Natural killer cell (primary cell): ENCODE measurements at regions of chr5 and their contacts with region 1.

Region 1: DNA sequence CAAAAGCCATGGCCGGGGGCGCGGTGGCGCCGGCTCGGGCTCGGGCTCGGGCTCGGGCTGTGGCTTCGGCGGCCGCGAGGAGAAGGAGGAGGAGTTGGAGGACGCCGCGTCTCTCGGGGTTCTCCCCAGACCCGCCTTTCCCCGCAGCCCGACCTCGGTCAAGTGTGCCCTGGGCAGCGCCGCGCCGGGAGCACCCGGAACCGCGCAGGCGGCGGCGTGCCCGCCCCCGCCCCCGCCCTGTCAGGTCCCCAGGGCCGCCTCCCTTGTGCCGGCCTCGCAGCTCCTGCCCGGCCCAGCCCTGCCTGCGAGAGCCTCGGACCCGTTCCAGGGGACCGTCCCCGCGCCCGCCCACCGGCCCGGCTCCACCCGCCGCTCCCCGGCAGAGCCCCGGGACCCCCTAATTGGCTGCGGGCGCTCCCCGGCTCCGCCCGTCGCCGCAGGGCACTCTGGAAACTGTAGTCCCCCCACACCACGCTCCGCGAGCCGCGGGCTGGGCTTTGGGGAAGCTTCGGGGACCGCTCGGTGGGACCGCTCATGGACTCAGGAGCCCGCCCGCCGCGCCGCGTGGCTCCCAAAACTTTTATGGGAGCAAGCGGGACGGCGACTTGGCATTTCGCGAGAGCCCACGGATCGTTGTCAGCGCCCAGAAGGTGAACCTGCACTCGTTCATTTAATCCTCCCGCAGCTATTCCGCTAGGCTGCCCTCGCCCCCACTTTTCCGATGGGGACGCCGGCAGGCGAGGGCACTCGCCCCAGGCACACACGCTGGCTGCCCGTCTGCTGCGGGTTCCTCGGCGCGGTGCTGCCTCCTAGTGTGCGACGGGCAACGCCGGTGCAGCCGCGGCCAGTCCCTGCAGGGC is at the start of gene STK10:
- DNase-seq: peak; percentile 87 to 95
- ATAC-seq: peak; percentile 65 to 85 (median 76)
- H3K4me3 ChIP-seq: peak within 1 kb of the TSS; percentile 66
- H3K4me3 Mint-ChIP-seq: peak within 1 kb of the TSS; percentile 98
- H3K27ac ChIP-seq: peak within 1 kb of the TSS; percentile 85
- H3K27ac Mint-ChIP-seq: peak within 1 kb of the TSS; percentile 97 to 98
- H3K4me1 ChIP-seq: peaks cover 30% of the 10 kb centered on the region
- H3K4me1 Mint-ChIP-seq: peaks cover 39 to 40% of the 10 kb centered on the region in 2 donors
- H3K27me3 ChIP-seq: no peaks in the 10 kb centered on the region
- H3K27me3 Mint-ChIP-seq: no peaks in the 10 kb centered on the region
- CTCF ChIP-seq: peak; percentile 86
- total RNA-seq, gene STK10: 705 to 879 (median 783) TPM

Region 2: GRCh38 chr5:172006321-172007174 is 181.7 kb before region 1 on chr5 and contains the start of gene FBXW11:
- intact Hi-C with region 1: loop called (anchors 5 kb)
- DNase-seq: peak; percentile 90 to 98
- ATAC-seq: peak; percentile 88 to 95 (median 89)
- H3K4me3 ChIP-seq: peak within 1 kb of the TSS; percentile 72
- H3K4me3 Mint-ChIP-seq: peak within 1 kb of the TSS; percentile 100
- H3K27ac ChIP-seq: peak within 1 kb of the TSS; percentile 98
- H3K27ac Mint-ChIP-seq: peak within 1 kb of the TSS; percentile 98 to 100
- H3K4me1 ChIP-seq: peaks cover 26% of the 10 kb centered on the region
- H3K4me1 Mint-ChIP-seq: peaks cover 52 to 53% of the 10 kb centered on the region in 2 donors
- H3K27me3 ChIP-seq: no peaks in the 10 kb centered on the region
- H3K27me3 Mint-ChIP-seq: no peaks in the 10 kb centered on the region
- CTCF ChIP-seq: no peak
- total RNA-seq, gene FBXW11: 26.7 to 40.3 (median 39.5) TPM

Region 3: DNA sequence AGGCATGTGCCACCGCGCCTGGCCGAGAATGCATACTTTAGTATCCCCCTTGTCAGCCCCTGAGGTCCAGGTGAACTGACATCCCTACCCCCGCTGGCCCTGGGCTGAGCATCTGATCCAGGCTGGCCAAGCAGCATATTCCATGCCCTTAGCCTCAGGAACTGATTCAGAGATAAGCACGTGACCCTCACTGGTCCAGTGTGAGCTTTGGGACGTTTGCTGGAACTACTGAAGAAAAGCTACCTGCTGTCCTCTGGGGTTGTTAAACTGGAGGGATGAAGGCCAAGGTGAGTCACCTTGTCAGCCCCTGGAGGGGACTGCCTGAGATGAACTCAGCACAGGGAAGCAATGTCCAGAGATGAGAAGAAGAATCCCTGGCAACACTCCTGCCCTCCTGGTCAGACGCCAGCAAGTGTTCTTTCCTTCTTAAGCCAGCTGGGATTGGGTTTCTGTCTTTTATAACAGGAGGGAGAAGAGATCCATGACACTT is 122.7 kb before region 1 on chr5:
- intact Hi-C with region 1: loop called (anchors 2 kb)
- DNase-seq: no peak
- ATAC-seq: no peak
- H3K4me3 ChIP-seq: no peak overlapping the region
- H3K4me3 Mint-ChIP-seq: peak overlapping the region; percentile 82
- H3K27ac ChIP-seq: peak overlapping the region; percentile 65
- H3K27ac Mint-ChIP-seq: peak overlapping the region; percentile 92 to 94
- H3K4me1 ChIP-seq: peaks cover 36% of the 10 kb centered on the region
- H3K4me1 Mint-ChIP-seq: peaks cover 60 to 62% of the 10 kb centered on the region in 2 donors
- H3K27me3 ChIP-seq: no peaks in the 10 kb centered on the region
- H3K27me3 Mint-ChIP-seq: no peaks in the 10 kb centered on the region
- CTCF ChIP-seq: no peak

Region 4: DNA sequence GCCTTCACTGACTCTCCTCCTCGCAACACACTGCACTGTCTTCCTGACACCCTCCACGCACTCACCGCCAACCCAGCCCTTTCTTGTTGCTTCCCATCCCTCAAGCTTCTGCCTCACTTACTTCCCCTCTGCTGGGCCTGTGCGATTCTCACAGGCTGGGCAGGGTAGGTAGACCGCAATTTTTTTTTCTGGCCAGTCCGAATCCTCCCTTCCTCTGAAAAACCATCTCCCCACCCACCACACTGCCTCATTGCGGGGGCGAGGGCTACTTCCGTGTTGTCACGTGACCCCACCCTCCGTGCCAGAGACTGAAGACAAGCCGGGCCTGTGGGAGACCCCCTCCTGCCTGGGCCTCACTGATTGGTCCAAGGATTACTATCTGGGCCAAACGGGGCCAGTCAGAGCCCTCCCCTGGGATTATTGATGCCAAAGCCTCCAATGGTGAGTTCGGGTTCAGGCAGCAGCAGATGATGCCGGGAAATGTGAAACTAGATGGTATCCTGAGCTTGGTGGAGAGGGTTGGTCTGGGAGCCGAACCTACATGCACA is 73.3 kb before region 1 on chr5:
- intact Hi-C with region 1: loop called (anchors 1 kb)
- DNase-seq: peak; percentile 69 to 86
- ATAC-seq: peak; percentile 47 to 76 (median 73)
- H3K4me3 ChIP-seq: peak overlapping the region; percentile 2
- H3K4me3 Mint-ChIP-seq: peak overlapping the region; percentile 85
- H3K27ac ChIP-seq: peak overlapping the region; percentile 85
- H3K27ac Mint-ChIP-seq: peak overlapping the region; percentile 94 to 97
- H3K4me1 ChIP-seq: peaks cover 96% of the 10 kb centered on the region
- H3K4me1 Mint-ChIP-seq: peaks cover 76 to 91% of the 10 kb centered on the region in 2 donors
- H3K27me3 ChIP-seq: no peaks in the 10 kb centered on the region
- H3K27me3 Mint-ChIP-seq: no peaks in the 10 kb centered on the region
- CTCF ChIP-seq: no peak

Region 5: GRCh38 chr5:172150514-172151425 is 37.5 kb before region 1 on chr5:
- intact Hi-C with region 1: loop called (anchors 2 kb)
- DNase-seq: peak; percentile 52 to 54
- ATAC-seq: peak; percentile 66 to 79 (median 74)
- H3K4me3 ChIP-seq: no peak overlapping the region
- H3K4me3 Mint-ChIP-seq: peak overlapping the region; percentile 78
- H3K27ac ChIP-seq: peak overlapping the region; percentile 71
- H3K27ac Mint-ChIP-seq: peak overlapping the region; percentile 97 to 98
- H3K4me1 ChIP-seq: peaks cover 89% of the 10 kb centered on the region
- H3K4me1 Mint-ChIP-seq: peaks cover 81 to 86% of the 10 kb centered on the region in 2 donors
- H3K27me3 ChIP-seq: no peaks in the 10 kb centered on the region
- H3K27me3 Mint-ChIP-seq: no peaks in the 10 kb centered on the region
- CTCF ChIP-seq: no peak

Region 6: DNA sequence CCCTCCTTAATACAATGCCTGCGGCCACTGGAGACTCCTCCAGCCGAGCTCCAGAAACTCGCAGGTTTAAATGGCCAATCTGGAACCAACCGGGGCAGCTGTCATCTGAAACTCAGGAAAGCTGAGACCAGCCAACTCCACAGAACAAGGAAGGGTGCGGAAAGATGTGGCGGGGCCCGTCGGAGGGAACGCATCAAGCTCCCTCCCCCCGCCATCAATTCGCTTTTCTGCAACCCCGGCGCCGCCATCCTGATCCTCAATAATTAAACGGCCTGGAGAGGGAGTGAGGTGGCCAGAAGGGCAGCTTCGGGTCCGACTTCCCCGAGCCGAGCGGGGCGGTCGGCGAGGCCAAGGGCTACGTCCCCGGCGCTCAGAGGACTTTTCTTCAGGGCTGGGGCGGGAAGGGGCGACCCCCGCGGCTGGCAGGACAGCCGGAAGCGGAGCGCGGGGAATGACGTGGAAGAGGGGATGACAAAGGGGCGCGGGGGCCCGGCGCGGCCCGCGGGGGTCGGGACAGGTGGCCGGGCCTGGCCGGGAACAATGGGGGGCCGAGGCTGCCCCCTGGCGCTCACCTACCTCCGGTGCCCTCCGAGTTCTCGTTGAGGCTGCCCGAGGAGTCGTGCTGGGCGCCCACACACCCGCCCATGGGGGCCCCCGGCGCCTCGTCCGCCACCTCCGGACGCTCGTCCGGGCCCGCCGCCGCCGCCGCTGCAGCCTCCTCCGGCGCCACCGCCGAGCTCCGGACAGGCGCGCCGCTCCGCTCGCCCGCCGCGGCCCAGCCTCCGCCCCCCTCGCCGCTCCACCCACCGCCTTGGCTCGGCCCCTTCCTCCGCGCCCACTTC is 95.0 kb after region 1 on chr5 and contains the start of gene UBTD2:
- intact Hi-C with region 1: loop called (anchors 10 kb)
- DNase-seq: peak; percentile 72 to 82
- ATAC-seq: peak; percentile 86 to 93 (median 88)
- H3K4me3 ChIP-seq: peak within 1 kb of the TSS; percentile 66
- H3K4me3 Mint-ChIP-seq: peak within 1 kb of the TSS; percentile 93
- H3K27ac ChIP-seq: no peak within 1 kb of the TSS
- H3K27ac Mint-ChIP-seq: peak within 1 kb of the TSS; percentile 64 to 76
- H3K4me1 ChIP-seq: peaks cover 11% of the 10 kb centered on the region
- H3K4me1 Mint-ChIP-seq: peaks cover 17 to 18% of the 10 kb centered on the region in 2 donors
- H3K27me3 ChIP-seq: no peaks in the 10 kb centered on the region
- H3K27me3 Mint-ChIP-seq: no peaks in the 10 kb centered on the region
- CTCF ChIP-seq: peak; percentile 49
- total RNA-seq, gene UBTD2: 1.7 to 3.3 (median 2.6) TPM

Region 7: DNA sequence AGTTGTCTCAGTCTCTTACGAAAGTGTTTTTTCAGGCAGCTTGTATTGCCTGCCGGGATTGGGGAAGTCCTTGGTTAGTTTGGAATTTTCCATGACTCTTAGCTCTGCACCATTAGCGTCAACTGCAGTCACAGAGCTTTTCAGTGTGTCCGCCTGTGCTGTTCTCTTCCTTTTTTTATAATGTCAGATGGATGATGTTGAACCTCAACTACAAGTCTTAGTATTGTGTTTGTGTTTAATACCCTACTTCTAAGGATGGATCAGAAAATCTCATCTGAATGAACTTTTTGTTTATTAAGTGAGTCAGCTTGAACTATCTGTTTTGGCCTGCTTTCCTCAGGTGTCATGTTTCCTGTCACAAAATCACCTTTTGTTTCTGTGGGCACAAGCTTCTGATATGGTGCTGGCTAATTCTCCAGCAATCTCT is 828.4 kb after region 1 on chr5:
- intact Hi-C with region 1: no loop called
- DNase-seq: no peak
- ATAC-seq: no peak
- H3K4me3 ChIP-seq: no peak overlapping the region
- H3K4me3 Mint-ChIP-seq: no peak overlapping the region
- H3K27ac ChIP-seq: no peak overlapping the region
- H3K27ac Mint-ChIP-seq: peak overlapping the region; percentile 28 to 53
- H3K4me1 ChIP-seq: peaks cover 3% of the 10 kb centered on the region
- H3K4me1 Mint-ChIP-seq: peaks cover 47 to 53% of the 10 kb centered on the region in 2 donors
- H3K27me3 ChIP-seq: no peaks in the 10 kb centered on the region
- H3K27me3 Mint-ChIP-seq: no peaks in the 10 kb centered on the region
- CTCF ChIP-seq: no peak